ENCODE measurements at regions of chr2 and their contacts with region 1.

Region 1: GRCh38 chr2:44955593-44956392 is 14.3 kb downstream of the SIX3 start:
- DNase-seq: peak; percentile 71
- H3K4me3 ChIP-seq: no peak overlapping the region
- H3K27ac ChIP-seq: no peak overlapping the region
- H3K4me1 ChIP-seq: peaks cover 15% of the 10 kb centered on the region
- H3K27me3 ChIP-seq: peaks cover 45% of the 10 kb centered on the region
- CTCF ChIP-seq: peak; percentile 80

Region 2: GRCh38 chr2:44392338-44392943 is 563.4 kb before region 1 on chr2:
- intact Hi-C with region 1: loop called (anchors 5 kb)
- DNase-seq: peak; percentile 41
- H3K4me3 ChIP-seq: no peak overlapping the region
- H3K27ac ChIP-seq: no peak overlapping the region
- H3K4me1 ChIP-seq: no peaks in the 10 kb centered on the region
- H3K27me3 ChIP-seq: no peaks in the 10 kb centered on the region
- CTCF ChIP-seq: peak; percentile 42

Region 3: DNA sequence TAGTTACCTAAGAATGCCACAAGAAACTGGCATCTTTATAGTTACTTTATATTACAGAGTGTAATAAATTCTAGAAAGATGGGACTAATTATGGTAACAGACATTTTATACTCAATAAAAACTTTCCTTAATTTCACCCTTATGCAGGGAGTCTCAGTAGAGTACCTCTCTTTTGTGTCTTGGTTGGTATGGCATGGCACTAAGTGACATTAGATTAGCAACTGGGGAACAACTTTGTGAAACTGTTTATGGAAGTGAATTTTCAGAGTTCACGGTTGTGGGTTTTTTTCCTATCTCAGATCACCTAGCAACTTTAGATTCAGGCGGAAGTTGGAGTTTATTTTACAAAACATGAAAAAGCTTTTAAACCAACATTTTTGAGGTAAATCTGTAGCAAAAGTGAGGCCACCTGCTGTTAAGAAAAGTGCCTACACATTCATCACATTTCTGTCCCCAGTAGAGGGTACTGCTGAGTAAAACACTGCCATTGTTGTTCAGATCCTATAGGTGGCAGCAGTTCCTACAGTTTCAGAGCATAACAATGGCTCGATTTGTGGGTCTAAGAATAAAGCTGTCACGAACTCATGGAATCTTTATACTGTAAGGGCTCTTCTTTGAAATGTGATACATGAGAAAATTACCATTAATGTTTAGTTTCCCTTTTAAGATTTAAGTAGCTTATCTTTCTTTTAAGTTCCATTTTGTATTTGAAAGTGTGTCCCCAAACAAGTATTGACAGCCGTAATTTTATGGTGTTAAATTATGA is 476.5 kb before region 1 on chr2:
- intact Hi-C with region 1: loop called (anchors 2 kb)
- DNase-seq: peak; percentile 51
- H3K4me3 ChIP-seq: no peak overlapping the region
- H3K27ac ChIP-seq: no peak overlapping the region
- H3K4me1 ChIP-seq: no peaks in the 10 kb centered on the region
- H3K27me3 ChIP-seq: no peaks in the 10 kb centered on the region
- CTCF ChIP-seq: peak; percentile 97

Region 4: GRCh38 chr2:44560352-44560751 is 395.4 kb before region 1 on chr2:
- intact Hi-C with region 1: loop called (anchors 10 kb)
- DNase-seq: peak; percentile 20
- H3K4me3 ChIP-seq: no peak overlapping the region
- H3K27ac ChIP-seq: no peak overlapping the region
- H3K4me1 ChIP-seq: no peaks in the 10 kb centered on the region
- H3K27me3 ChIP-seq: no peaks in the 10 kb centered on the region
- CTCF ChIP-seq: peak; percentile 16

Region 5: GRCh38 chr2:44632931-44633689 is 322.7 kb before region 1 on chr2:
- intact Hi-C with region 1: no loop called
- DNase-seq: no peak
- H3K4me3 ChIP-seq: no peak overlapping the region
- H3K27ac ChIP-seq: no peak overlapping the region
- H3K4me1 ChIP-seq: no peaks in the 10 kb centered on the region
- H3K27me3 ChIP-seq: no peaks in the 10 kb centered on the region
- CTCF ChIP-seq: no peak

Region 6: DNA sequence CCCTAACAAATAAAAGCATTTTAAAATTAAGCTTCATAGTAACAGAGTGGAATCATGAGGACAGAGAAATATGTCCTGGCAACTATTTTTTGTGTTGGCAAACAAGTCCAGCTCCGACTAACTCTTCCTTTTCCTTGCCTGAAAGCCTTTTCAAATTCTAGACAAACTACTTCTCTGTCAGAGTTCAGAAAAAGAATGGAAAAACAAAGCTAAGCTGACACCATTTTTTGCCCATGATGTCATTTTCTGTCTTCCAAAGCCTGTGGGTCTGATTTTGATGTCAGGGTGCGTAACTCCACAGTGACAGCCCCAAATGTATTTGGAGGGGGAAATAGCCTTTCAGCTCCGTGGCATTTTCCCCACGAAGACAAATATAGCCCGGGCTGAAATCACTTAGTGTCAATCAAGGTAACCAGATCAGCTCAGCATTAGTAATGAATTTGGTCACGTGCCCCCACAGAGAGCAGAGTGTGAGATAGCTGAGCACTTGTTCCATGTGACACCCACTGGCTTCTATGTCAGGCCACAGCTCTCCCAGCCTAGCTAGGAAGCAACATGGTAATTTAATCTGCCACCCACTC is 286.5 kb after region 1 on chr2:
- intact Hi-C with region 1: no loop called
- DNase-seq: no peak
- H3K4me3 ChIP-seq: no peak overlapping the region
- H3K27ac ChIP-seq: no peak overlapping the region
- H3K4me1 ChIP-seq: no peaks in the 10 kb centered on the region
- H3K27me3 ChIP-seq: no peaks in the 10 kb centered on the region
- CTCF ChIP-seq: no peak